GM10248 (cell line): ENCODE measurements at regions of chr9 and their contacts with region 1.

Region 1: DNA sequence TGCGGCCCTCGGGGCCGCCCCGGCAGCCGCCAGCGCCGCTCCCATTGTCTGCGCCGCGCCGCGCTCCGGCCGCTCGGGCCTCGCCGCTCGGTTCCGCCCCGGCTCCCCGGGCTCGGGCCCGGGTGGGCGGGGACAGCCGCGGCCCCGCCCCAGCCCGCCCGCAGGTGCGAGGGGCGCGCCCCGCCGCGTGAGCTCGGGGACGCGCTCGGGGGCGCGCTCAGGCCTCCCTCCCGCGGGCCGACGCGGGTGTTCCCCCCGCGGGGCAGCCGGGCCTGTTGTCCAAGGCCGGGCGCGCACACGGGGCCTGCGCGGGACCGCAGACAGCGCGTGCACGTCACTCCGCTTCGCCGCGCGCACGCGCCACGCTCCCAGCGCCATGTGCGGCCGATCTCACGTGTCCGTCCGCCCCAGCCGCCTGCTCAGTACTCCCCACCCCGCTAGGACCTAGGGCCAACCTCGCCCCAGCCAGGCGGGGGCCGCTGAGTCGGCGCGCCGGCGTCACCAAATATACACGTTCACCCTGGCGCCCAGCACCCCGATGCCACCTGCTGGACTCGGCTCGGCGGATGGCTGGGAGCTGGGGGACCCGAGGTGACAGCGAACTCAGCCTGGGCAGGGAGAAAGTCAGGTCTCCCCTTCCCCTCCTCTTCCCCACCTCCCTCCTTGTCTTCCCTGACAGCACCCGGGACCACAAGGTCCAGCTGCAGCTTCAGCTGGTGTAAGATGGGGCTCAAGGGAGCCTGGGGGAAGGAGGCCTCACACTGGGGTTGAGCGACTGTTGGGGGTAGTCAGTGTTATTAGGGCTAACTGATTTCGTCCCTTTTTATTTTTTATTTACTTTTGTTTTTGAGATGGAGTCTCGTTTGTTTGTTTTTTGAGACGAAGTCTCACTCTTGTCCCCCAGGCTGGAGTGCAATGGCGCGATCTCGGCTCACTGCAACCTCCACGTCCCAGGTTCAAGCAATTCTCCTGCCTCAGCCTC is 14.3 kb downstream of the GBGT1 start:
- DNase-seq: peak; percentile 95
- CTCF ChIP-seq: peak; percentile 29

Region 2: GRCh38 chr9:133030317-133031129 is 118.9 kb before region 1 on chr9 and contains the start of gene GTF3C5:
- CTCF ChIA-PET with region 1: interaction called, 37 read pairs
- POLR2A ChIA-PET with region 1: interaction called, 5 read pairs
- DNase-seq: peak; percentile 99
- CTCF ChIP-seq: no peak

Region 3: GRCh38 chr9:133098104-133098890 is 51.1 kb before region 1 on chr9:
- CTCF ChIA-PET with region 1: interaction called, 473 read pairs
- POLR2A ChIA-PET with region 1: no interaction called
- DNase-seq: no peak
- CTCF ChIP-seq: no peak

Region 4: DNA sequence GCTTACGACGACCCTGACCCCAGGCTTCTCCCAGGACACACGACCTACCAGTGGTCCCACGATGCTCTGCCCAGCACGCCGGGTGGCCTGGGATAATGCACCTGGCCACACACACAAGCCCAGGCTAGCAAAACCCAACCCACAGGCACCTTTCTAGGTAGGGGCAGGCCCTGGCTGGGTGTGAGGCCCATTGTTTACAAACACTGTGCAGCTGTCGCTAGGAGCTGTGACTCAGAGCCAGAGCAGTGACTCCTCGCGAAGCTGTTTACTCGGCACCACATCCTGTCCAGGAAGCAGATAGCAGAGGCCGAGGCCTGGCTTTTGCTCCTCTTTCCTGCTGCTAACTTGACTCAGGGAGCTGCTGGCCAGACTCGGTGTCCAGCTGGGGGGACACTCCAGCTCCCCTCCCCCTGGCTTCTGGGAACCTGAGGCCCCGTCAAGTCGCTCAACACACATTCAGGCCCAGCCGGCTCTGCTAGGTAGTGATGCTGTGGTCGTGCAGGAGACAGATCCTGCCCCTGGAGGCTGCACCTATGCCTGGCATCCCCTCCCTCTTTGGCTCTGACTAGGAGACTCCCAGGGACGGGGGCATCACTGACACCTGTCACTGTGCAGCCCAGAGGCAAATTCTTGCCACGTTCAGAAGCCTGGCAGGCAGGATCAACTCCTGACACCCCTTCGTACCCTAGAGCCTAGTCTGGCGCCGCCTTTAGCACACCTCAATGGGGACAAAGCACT is 15.6 kb before region 1 on chr9:
- CTCF ChIA-PET with region 1: interaction called, 257 read pairs
- POLR2A ChIA-PET with region 1: interaction called, 11 read pairs
- DNase-seq: peak; percentile 93
- CTCF ChIP-seq: no peak

Region 5: DNA sequence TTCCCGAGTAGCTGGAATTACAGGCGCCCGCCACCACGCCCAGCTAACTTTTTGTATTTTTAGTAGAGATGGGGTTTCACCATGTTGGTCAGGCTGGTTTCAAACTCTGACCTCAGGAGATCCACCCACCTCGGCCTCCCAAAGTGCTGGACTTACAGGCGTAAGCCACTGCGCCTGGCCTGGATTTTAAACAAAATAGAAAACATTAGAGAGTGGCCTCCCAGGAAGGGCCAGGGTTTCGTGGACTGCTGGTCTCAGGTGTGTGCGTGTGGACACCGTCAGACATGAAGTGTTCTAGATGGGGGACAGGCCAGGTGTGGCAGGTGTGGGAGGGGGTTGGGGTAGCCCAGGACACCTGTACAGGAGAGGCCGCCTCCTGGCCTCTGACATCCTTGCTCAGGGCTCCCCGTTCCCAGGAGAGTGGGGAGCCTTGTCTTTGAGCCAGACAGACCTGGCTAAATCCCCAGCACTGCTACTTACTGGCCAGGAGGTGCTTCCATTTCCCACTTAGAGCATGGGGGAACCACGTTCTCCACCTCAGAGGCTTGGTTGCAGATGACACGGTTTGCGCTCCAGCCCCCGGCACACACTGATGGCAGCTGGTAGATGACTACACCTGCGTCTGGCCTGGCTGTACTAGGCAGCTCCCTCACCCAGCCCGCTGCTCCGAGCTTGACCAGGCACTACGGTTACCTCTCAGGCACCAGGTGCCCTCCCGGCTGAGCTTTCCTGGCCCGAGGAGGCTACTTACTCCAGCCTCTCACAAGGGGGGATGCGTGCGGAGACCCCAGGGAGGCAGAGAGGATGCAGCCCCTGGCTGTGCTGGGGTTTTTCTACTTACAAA is 21.5 kb after region 1 on chr9:
- CTCF ChIA-PET with region 1: interaction called, 14 read pairs
- POLR2A ChIA-PET with region 1: no interaction called
- DNase-seq: peak; percentile 19
- CTCF ChIP-seq: no peak